CD14-positive monocyte (primary cell): ENCODE measurements at regions of chr3 and their contacts with region 1.

Region 1: GRCh38 chr3:170368921-170369320 is 11.4 kb downstream of the SKIL start:
- DNase-seq: no peak
- H3K4me3 ChIP-seq: no peak overlapping the region
- H3K4me3 Mint-ChIP-seq: no peak overlapping the region
- H3K27ac ChIP-seq: no peak overlapping the region
- H3K27ac Mint-ChIP-seq: no peak overlapping the region
- H3K4me1 ChIP-seq: no peaks in the 10 kb centered on the region
- H3K4me1 Mint-ChIP-seq: peaks cover 9% of the 10 kb centered on the region
- H3K27me3 ChIP-seq: no peaks in the 10 kb centered on the region
- H3K27me3 Mint-ChIP-seq: peaks cover 0 to 4% (median 2%) of the 10 kb centered on the region in 3 donors
- CTCF ChIP-seq: peak; percentile 59

Region 2: DNA sequence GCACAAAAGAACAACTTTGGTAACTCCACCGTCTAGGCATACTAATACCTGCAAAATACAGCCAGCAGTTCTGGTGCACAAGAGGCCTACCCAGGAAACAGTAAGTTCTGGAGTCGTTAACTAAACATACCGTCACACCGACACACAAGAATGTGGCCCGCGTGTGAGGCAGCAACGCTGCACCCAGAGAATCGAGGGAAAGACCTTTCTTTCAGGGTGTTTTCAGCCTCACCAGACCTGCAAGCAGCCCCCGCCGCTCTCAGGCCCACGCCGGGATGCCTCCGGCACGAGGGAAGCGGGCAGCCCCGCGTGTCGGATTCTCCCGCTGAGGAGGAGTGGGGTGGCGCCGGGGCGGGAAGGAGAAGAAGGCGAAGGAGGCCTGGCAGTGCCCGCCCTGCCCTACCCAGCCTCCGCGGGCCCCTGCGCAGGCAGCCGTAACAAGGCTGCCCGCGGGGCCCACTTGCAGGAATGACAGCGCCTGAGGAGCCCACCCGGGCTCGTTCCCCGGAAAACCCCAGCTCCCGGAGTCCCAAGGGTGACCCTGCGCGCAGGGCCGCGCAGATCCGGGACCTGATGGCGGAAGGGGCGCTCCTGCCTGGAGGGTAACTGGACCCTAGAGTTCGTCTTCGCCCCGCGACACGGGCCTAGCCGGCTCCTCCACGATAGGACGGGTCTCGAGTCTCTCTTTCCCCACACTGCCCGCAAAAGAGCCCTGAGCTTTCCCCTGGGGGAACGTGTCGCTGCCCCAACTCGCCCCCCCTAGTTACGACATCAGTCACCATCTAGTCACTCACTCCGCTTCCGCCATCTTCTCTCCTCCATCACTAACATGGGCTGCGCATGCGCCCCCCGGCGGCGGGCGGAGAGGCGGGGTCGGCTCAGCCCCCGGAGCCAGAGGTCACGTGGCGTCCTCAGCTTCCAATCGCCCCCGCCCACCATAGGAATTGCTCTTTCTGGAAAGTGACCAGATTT is 187.7 kb before region 1 on chr3 and contains the start of gene PHC3:
- intact Hi-C with region 1: loop called in 1 of 2 experiments (anchors 10 kb)
- DNase-seq: peak; percentile 89 to 93 (median 89)
- H3K4me3 ChIP-seq: peak within 1 kb of the TSS; percentile 60 to 84 (median 80)
- H3K4me3 Mint-ChIP-seq: peak within 1 kb of the TSS; percentile 93 to 97
- H3K27ac ChIP-seq: peak within 1 kb of the TSS; percentile 90 to 98
- H3K27ac Mint-ChIP-seq: peak within 1 kb of the TSS; percentile 95 to 100 (median 99)
- H3K4me1 ChIP-seq: peaks cover 18 to 24% of the 10 kb centered on the region in 2 donors
- H3K4me1 Mint-ChIP-seq: peaks cover 23% of the 10 kb centered on the region
- H3K27me3 ChIP-seq: no peaks in the 10 kb centered on the region
- H3K27me3 Mint-ChIP-seq: peaks cover 0 to 2% (median 0%) of the 10 kb centered on the region in 3 donors
- CTCF ChIP-seq: no peak
- polyA plus RNA-seq, gene PHC3: 7.5 to 26.1 (median 12.6) TPM

Region 3: DNA sequence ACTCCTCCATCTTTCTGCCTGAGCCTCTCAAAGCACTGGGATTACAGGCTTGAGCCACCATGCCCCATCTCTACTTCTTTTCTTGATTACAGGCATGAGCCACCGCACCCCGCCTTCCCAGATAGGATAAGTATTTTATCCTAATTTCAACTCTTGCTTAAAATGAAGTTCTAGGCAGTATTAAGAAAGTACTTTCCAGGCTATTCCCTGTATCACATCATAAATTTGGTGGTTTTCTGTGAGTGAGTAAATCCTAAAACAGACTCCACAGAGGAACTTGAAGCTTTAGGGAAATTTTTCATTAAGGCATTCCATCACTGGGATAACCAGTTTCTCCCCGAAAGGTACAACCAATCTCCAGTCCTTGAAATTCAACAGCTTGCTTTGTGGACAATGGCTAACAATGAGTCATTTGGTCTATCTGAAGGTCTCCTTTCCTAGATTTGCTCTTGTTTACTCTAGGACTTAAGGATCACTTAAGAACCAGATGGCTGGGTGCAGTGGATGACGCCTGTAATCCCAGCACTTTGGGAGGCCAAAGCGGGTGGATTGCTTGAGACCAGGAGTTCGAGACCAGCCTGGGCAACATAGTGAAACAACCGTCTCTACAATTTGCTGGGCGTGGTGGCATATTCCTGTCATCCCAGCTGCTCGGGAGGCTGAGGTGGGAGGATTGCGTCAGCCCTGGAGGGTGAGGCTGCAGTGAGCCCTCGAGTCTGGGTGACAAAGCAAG is 61.1 kb before region 1 on chr3:
- intact Hi-C with region 1: loop called (anchors 2 to 5 kb)
- DNase-seq: no peak
- H3K4me3 ChIP-seq: no peak overlapping the region
- H3K4me3 Mint-ChIP-seq: no peak overlapping the region
- H3K27ac ChIP-seq: no peak overlapping the region
- H3K27ac Mint-ChIP-seq: no peak overlapping the region
- H3K4me1 ChIP-seq: no peaks in the 10 kb centered on the region
- H3K4me1 Mint-ChIP-seq: peaks cover 6% of the 10 kb centered on the region
- H3K27me3 ChIP-seq: no peaks in the 10 kb centered on the region
- H3K27me3 Mint-ChIP-seq: peaks cover 0 to 2% (median 2%) of the 10 kb centered on the region in 3 donors
- CTCF ChIP-seq: no peak